Vagina (tissue), 2 donors: ENCODE measurements at regions of chr6 and their contacts with region 1.

Region 1: DNA sequence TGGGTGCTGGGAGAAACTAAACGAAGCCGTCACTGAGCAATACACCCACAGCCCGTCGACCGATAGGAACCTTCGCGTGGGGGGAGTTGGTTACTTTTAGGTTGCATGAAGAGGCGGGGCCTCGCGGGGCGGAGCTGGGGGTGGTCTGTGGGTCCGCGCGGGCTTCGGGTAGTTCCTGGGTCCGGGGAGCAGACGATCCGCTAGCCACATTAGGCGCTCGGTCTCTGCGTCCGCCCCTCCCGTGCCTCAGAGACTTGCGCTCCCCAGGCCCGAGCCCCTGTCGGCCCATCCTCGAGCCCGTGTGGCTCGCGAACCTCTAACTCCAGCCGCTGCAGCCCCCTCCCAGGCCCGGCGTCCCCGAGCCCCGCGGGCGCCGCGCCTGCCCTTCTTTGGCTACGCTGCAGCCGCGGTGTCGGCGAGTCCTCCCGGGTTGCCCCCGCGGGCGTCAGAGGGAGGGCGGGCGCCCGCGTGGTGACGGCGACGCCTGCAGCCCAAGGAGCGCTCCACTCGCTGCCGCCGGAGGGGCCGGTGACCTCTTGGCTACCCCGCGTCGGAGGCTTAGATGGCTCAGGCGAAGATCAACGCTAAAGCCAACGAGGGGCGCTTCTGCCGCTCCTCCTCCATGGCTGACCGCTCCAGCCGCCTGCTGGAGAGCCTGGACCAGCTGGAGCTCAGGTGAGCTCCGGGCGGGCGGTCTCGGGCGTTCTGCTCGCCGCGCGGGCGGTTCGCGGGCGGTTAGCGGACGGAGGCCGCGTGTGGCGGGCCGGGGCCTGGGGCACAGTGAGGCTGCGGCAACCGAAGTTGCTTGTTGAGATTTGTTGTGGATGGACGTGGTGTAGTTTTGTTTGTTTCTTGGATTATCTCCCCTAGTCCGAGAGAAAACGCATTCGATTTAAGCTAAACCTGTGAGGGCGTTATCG is at the start of gene BAG2:
- DNase-seq: peak in 1 of 2 donors; percentile 93
- H3K4me3 ChIP-seq: peak within 1 kb of the TSS; percentile 57 to 72
- H3K27ac ChIP-seq: peak within 1 kb of the TSS; percentile 89
- H3K4me1 ChIP-seq: peaks cover 11% of the 10 kb centered on the region
- H3K27me3 ChIP-seq: no peaks in the 10 kb centered on the region
- CTCF ChIP-seq: no peak
- POLR2A ChIP-seq: peak in 1 of 2 donors; percentile 82
- total RNA-seq, gene BAG2: 8.8 TPM

Region 2: GRCh38 chr6:57075092-57075491 is 97.3 kb before region 1 on chr6:
- intact Hi-C with region 1: no loop called
- DNase-seq: no peak
- H3K4me3 ChIP-seq: no peak overlapping the region
- H3K27ac ChIP-seq: no peak overlapping the region
- H3K4me1 ChIP-seq: no peaks in the 10 kb centered on the region
- H3K27me3 ChIP-seq: no peaks in the 10 kb centered on the region
- CTCF ChIP-seq: no peak
- POLR2A ChIP-seq: no peak

Region 3: DNA sequence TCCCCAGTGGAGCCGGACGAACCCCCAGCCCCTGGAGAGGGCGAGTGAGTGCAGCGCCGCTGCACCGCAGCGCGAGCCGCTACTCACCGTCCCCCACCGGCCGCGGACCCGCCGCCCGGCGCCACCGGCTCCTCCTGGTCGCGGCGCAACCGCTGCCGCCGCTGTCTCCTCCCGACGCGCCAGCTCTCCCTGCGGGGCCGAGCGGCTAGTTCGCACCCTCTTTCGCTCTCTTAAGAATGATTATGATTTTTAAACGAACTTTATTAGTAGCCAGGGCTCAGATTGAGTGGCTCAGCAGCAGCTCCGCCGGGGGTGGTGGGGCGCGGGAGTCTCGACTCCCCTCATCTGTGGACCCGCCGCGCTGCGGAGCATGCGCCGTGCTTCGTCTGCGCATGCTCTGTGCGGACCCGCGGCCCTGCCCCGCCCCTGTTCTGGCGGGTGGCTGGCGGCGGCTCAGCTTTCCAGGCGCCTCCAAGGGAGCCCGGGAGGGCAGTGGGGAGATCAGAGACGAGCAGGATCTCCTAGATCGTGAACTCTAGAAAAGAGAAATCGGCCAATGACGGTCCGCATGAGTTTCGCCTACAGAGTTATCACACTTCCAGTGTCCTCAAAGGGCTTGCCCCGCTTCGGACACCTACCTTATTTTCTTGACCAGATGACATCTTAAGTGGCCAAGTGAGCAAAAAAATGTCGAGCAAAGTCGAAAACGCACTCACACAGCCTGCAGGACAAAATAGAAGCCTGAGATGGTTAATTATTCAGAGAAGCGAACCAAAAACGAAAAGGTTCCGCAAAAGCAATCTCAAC is 49.7 kb after region 1 on chr6 and contains the start of gene RAB23:
- intact Hi-C with region 1: loop called (anchors 2 kb)
- DNase-seq: no peak
- H3K4me3 ChIP-seq: peak within 1 kb of the TSS; percentile 87 to 99
- H3K27ac ChIP-seq: peak within 1 kb of the TSS; percentile 97
- H3K4me1 ChIP-seq: peaks cover 35% of the 10 kb centered on the region
- H3K27me3 ChIP-seq: no peaks in the 10 kb centered on the region
- CTCF ChIP-seq: no peak
- POLR2A ChIP-seq: peak in 1 of 2 donors; percentile 92
- total RNA-seq, gene RAB23: 31.4 TPM

Region 4: DNA sequence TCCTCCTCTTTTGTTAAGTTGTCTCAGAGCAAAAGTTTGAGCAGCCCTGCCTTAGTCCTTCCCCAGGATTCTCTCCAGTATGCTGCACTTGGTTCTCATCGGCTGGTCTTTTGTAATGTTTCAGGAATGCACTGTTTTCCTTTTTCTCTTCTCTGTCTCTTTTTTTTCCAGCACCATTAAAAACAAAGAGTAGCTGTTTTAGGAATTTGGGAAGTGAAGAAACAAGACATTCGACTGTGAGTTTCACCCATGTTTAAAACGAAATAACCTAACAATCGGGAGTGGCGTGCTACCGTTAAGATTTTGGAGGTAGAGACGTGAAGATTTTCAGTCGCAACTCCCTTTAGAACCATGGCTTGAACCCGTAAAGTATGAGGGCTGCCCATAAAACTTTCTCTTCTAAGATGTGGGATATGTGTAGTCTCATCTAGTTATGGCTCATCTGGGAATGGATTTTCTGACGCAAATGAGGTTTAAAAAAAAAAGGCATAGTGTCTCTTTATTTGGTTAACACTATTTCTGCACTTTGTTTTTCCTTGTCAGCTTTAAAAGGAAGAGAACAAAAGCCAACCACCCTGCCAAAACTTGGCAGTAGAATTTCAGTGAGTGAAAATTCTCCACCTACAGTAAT is 85.6 kb after region 1 on chr6:
- intact Hi-C with region 1: loop called (anchors 10 kb)
- DNase-seq: no peak
- H3K4me3 ChIP-seq: peak overlapping the region in 1 of 2 donors; percentile 7
- H3K27ac ChIP-seq: peak overlapping the region; percentile 89
- H3K4me1 ChIP-seq: peaks cover 33% of the 10 kb centered on the region
- H3K27me3 ChIP-seq: no peaks in the 10 kb centered on the region
- CTCF ChIP-seq: no peak
- POLR2A ChIP-seq: peak in 1 of 2 donors; percentile 7